ENCODE measurements at regions of chr14 and their contacts with region 1.

Region 1: DNA sequence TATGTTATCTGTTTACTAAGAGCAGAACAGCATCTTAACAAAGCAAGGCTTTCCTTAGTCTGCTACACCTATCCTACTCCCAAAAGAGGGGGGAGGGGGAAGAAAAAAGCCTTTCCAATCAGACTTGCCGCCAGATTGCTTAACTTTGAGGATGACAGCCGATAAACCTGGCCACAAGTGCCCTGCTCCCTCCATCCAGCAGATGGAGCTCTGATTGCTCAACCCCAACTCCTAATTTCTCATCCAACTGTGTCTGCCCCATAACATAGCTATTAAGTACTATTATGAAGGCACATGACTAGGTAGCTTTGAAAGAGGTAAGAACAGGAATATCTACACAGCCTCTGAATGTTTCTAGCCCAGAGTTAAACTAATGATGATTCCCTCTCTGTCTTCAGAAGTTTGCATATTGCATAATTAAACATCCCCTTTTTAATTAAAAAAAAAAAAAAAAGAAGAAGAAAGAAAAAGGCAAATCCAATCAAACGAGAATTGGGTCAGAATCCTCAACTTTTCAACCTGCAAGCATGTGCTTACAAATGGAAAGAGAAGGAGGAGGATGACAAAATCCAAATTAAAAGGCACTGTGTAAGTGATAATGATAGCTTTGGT is 247.4 kb downstream of the GALC start:
- DNase-seq: peak in 1 of 5 donors; percentile 1
- H3K4me3 ChIP-seq: no peak overlapping the region
- H3K4me3 Mint-ChIP-seq: no peak overlapping the region
- H3K27ac ChIP-seq: no peak overlapping the region
- H3K27ac Mint-ChIP-seq: no peak overlapping the region
- H3K4me1 ChIP-seq: no peaks in the 10 kb centered on the region
- H3K4me1 Mint-ChIP-seq: peaks cover 0 to 2% (median 0%) of the 10 kb centered on the region in 4 donors
- H3K27me3 ChIP-seq: no peaks in the 10 kb centered on the region
- H3K27me3 Mint-ChIP-seq: peaks cover 2% of the 10 kb centered on the region in 2 donors

Region 2: DNA sequence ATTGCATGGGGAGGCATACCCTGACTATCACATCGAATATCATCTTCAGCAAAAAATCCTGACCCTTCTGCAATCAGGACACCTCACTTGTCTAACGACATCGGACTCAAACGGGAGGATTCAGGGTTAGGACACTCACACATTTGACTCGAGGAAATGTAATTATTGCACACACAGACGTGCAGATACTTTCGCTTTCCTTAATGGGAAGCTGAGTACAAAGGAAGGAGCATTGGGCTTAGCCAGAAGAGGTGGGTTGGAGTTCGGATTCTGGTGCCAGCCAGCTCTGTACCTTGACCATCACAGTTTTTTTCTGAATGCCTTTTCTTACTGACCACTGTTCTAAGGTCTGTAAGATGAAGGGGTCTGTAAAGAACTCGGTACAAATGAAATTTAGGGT is 13.1 kb before region 1 on chr14:
- CTCF ChIA-PET with region 1: interaction called, 11 read pairs
- POLR2A ChIA-PET with region 1: no interaction called
- intact Hi-C with region 1: no loop called
- DNase-seq: no peak
- H3K4me3 ChIP-seq: no peak overlapping the region
- H3K4me3 Mint-ChIP-seq: no peak overlapping the region
- H3K27ac ChIP-seq: no peak overlapping the region
- H3K27ac Mint-ChIP-seq: no peak overlapping the region
- H3K4me1 ChIP-seq: no peaks in the 10 kb centered on the region
- H3K4me1 Mint-ChIP-seq: no peaks in the 10 kb centered on the region
- H3K27me3 ChIP-seq: no peaks in the 10 kb centered on the region
- H3K27me3 Mint-ChIP-seq: peaks cover 2 to 6% of the 10 kb centered on the region in 2 donors

Region 3: DNA sequence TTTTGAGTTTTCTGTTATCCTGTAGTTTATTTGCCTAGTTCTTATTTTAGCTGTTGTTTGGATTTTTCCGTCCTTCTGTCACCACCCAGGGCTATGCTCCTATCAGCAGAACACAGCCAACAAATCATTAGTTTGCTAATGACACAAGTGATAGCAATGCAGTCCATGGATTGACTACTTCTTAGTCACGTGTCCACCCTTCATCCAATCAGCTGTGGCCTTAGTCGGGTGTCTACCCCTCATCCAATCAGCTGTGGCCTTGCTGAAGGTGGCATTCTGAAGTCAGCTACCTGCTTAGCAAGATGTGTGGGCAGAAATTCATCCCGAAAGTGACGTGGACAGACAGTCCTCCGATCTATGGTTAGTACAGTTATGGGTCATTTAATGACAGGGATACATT is 65.1 kb after region 1 on chr14:
- CTCF ChIA-PET with region 1: no interaction called
- POLR2A ChIA-PET with region 1: no interaction called
- intact Hi-C with region 1: no loop called
- DNase-seq: no peak
- H3K4me3 ChIP-seq: no peak overlapping the region
- H3K4me3 Mint-ChIP-seq: no peak overlapping the region
- H3K27ac ChIP-seq: no peak overlapping the region
- H3K27ac Mint-ChIP-seq: no peak overlapping the region
- H3K4me1 ChIP-seq: no peaks in the 10 kb centered on the region
- H3K4me1 Mint-ChIP-seq: no peaks in the 10 kb centered on the region
- H3K27me3 ChIP-seq: no peaks in the 10 kb centered on the region
- H3K27me3 Mint-ChIP-seq: peaks cover 0 to 14% of the 10 kb centered on the region in 2 donors